ENCODE measurements at regions of chr15 and their contacts with region 1.

Region 1: GRCh38 chr15:98518823-98519561 is 129.3 kb upstream of the IGF1R start:
- DNase-seq: peak; percentile 68 to 76 (median 76)
- ATAC-seq: peak; percentile 97
- H3K4me3 ChIP-seq: no peak overlapping the region
- H3K27ac ChIP-seq: no peak overlapping the region
- H3K4me1 ChIP-seq: no peaks in the 10 kb centered on the region
- H3K27me3 ChIP-seq: peaks cover 0 to 9% of the 10 kb centered on the region in 2 experiments; a peak in 2 of 5 replicates
- CTCF ChIP-seq: peak; percentile 77 to 81 (median 79)
- EP300 ChIP-seq: no peak
- POLR2A ChIP-seq: no peak
- RAD21 ChIP-seq: peak; percentile 72 to 77

Region 2: GRCh38 chr15:98635848-98636247 is 116.9 kb after region 1 on chr15:
- CTCF ChIA-PET with region 1: no interaction called
- POLR2A ChIA-PET with region 1: no interaction called
- in situ Hi-C with region 1: no loop called
- intact Hi-C with region 1: no loop called
- DNase-seq: no peak
- ATAC-seq: no peak
- H3K4me3 ChIP-seq: no peak overlapping the region
- H3K27ac ChIP-seq: no peak overlapping the region
- H3K4me1 ChIP-seq: no peaks in the 10 kb centered on the region
- H3K27me3 ChIP-seq: peaks cover 3 to 33% of the 10 kb centered on the region in 2 experiments; a peak in 4 of 5 replicates
- CTCF ChIP-seq: no peak
- EP300 ChIP-seq: no peak
- POLR2A ChIP-seq: no peak
- RAD21 ChIP-seq: no peak

Region 3: DNA sequence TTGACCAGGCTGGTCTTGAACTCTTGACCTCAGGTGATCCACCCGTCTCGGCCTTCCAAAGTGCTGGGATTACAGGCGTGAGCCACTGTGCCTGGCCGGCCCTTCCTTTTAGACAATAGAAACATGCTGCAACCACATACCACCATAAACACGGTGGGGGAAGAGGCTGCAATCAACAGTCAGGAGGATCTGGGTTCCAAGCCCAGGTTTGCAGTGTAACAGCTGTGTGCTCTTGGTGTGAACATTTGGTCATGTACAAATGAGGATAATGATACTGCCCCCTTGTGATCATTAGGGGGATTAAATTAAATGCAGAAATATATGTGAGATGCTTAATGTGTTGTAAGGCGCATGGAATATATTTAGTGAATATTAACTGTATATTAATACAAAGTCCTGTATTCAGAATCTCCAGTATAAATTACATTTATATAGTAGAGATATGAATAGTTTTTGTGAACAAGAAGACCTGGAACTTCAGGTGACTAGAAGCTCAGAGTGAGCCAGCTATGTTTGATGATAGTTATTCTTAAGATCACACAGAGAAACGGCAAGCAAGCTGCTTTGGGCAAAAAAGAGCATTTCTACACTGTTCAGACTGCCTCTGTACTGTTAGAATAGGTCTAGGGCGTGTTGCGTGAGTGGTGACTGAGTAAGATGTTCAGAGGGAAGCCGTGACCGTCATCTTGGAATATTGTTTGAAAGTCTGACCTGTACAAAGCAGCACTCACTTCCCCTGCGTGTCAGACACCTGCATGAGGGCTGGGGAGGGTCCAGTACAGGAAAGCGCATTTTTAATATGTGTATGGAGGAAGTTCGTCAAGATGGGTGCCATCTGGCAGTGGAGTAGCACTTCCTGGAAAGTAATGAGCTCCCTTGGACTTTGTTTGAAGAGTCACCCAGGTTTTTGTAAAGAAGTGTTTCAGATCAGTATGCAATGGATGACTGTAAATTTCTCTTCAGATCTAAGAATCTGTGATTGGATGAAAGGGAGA is 362.8 kb after region 1 on chr15:
- CTCF ChIA-PET with region 1: no interaction called
- POLR2A ChIA-PET with region 1: no interaction called
- in situ Hi-C with region 1: no loop called
- intact Hi-C with region 1: loop called (anchors 10 kb)
- DNase-seq: peak; percentile 41 to 50 (median 46)
- ATAC-seq: peak; percentile 76
- H3K4me3 ChIP-seq: no peak overlapping the region
- H3K27ac ChIP-seq: no peak overlapping the region
- H3K4me1 ChIP-seq: no peaks in the 10 kb centered on the region; a peak in 1 of 5 replicates
- H3K27me3 ChIP-seq: peaks cover 10 to 26% of the 10 kb centered on the region in 2 experiments; a peak in 4 of 5 replicates
- CTCF ChIP-seq: peak; percentile 44 to 57 (median 56); a peak in 5 of 6 replicates
- EP300 ChIP-seq: no peak
- POLR2A ChIP-seq: no peak
- RAD21 ChIP-seq: peak; percentile 21 to 57; a peak in 3 of 4 replicates

Region 4: GRCh38 chr15:99068186-99068585 is 549.2 kb after region 1 on chr15:
- CTCF ChIA-PET with region 1: no interaction called
- POLR2A ChIA-PET with region 1: no interaction called
- in situ Hi-C with region 1: loop called (anchors 10 kb)
- intact Hi-C with region 1: no loop called
- DNase-seq: no peak
- ATAC-seq: no peak
- H3K4me3 ChIP-seq: no peak overlapping the region
- H3K27ac ChIP-seq: no peak overlapping the region
- H3K4me1 ChIP-seq: no peaks in the 10 kb centered on the region
- H3K27me3 ChIP-seq: peaks cover 4 to 25% of the 10 kb centered on the region in 2 experiments; a peak in 3 of 5 replicates
- CTCF ChIP-seq: no peak
- EP300 ChIP-seq: no peak
- POLR2A ChIP-seq: no peak
- RAD21 ChIP-seq: no peak

Region 5: DNA sequence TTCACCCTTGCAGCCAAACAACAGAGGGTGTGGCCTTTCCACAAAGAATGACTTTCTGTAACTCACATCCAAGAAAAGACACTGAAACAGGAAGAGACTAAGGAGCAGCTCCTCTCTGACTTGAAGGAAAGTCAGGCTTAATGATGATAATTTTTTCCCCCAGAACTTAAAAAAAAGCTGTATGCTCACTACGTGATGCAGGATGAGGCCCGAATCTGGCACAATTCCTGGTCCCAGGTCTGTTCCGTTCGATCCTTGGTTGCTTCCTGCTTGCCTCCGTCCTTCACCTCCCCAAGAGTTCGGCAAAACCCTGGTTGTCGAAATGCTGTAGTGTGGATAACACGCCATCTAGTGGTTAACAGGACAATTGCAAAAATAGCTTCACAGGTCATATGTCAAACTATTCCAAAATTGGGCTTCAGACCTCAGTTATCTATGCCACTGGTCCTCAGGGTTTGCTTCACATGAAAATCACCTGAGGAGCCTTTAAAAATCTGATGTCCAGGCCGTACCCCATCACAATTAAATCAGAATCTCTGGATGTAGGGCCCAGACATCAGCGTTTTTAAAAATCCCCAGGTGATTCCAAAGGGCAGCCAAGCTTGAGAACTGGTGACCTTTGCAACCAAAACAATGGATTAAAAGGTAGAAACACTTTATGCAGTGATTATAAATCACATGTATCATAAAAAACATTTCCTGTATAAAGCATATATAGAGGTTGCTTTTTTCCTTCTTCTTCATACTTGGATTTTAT is 557.7 kb after region 1 on chr15:
- CTCF ChIA-PET with region 1: no interaction called
- POLR2A ChIA-PET with region 1: no interaction called
- in situ Hi-C with region 1: no loop called
- intact Hi-C with region 1: loop called (anchors 1 kb)
- DNase-seq: peak; percentile 58 to 68 (median 62)
- ATAC-seq: peak; percentile 93
- H3K4me3 ChIP-seq: no peak overlapping the region
- H3K27ac ChIP-seq: no peak overlapping the region
- H3K4me1 ChIP-seq: no peaks in the 10 kb centered on the region
- H3K27me3 ChIP-seq: peaks cover 0 to 2% of the 10 kb centered on the region in 2 experiments; a peak in 1 of 5 replicates
- CTCF ChIP-seq: peak; percentile 77 to 84 (median 81)
- EP300 ChIP-seq: no peak
- POLR2A ChIP-seq: no peak
- RAD21 ChIP-seq: peak; percentile 62 to 87

Measured in K562 (cell line).